ENCODE measurements at regions of chr3 and their contacts with region 1.

Region 1: DNA sequence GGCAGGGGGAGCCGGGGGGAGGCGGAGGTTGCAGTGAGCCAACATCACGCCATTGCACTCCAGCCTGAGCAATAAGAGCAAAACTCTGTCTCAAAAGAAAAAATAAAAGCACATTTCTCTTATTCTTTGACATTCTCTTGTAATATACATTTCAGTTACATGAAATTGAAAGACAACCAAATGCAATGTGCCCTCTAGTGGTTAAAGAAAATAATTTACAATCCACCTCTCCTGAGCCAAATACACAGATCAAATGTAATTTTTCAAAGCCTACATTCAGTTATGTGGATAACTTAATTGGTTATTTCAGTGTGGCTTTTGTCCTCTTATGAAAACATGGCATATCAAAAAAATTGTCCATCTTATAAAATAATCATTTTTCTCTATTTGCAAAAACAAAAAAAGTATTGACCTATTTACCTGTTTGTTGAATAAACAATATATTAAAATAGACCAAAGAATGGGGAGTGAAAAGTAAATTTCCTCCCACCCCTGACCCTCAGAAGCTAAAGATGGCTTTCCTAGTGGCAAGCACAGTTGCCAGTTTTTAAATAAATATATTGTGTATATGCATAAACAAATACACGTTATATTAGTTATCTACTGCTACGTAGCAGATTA is 14.2 kb upstream of the U2SURP start:
- DNase-seq: no peak
- ATAC-seq: peak; percentile 57
- H3K4me3 ChIP-seq: no peak overlapping the region
- H3K27ac ChIP-seq: no peak overlapping the region
- H3K4me1 ChIP-seq: no peaks in the 10 kb centered on the region
- H3K27me3 ChIP-seq: no peaks in the 10 kb centered on the region
- CTCF ChIP-seq: peak; percentile 74

Region 2: DNA sequence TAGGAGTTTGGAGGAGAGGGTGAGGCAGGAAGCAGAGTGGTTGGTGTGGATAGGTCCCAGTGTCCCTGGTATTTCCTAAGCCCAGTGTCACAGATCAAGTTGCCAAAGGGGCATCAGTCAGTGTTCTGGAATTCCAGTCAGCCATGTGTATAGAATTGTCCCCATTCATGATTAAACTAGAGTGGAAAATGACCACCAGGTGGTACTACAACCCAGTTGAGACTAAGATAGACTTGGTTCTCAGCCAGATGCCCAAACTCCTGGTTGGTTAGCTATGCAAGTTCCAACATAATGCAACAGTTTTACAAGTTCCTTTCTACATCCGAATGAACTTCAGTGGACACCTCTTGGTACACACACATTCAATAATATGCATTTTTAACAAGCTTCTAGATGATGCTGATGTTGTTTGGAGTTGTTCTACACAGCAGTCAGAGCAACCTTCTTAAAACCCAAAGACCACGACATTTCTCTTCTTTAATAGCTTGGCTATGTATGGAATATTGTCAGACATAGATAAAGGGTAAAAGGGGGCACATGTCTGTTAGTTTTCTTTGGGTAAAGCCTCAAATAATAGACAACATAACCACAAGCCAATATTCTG is 400.3 kb before region 1 on chr3:
- intact Hi-C with region 1: loop called (anchors 10 kb)
- DNase-seq: no peak
- ATAC-seq: peak; percentile 95
- H3K4me3 ChIP-seq: no peak overlapping the region
- H3K27ac ChIP-seq: no peak overlapping the region
- H3K4me1 ChIP-seq: no peaks in the 10 kb centered on the region
- H3K27me3 ChIP-seq: peaks cover 6% of the 10 kb centered on the region
- CTCF ChIP-seq: peak; percentile 59

Region 3: DNA sequence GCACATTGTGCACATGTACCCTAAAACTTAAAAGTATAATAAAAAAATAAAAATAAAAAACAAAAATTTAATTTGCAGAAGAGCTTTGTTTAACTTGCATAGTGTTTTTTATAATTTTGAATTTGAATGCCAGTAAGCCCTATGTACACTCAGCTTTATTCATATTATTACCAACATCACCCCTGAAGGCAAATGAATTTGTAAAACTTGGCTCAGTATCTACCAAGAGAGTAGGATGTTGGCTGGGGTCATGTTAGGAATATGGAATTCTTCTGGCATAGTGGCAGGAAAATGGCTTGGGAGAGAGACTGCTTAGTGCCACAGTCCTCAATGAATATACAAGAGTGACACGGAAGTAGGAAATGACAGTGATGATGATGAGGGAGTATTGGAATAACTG is 232.7 kb before region 1 on chr3:
- intact Hi-C with region 1: no loop called
- DNase-seq: no peak
- ATAC-seq: no peak
- H3K4me3 ChIP-seq: no peak overlapping the region
- H3K27ac ChIP-seq: no peak overlapping the region
- H3K4me1 ChIP-seq: no peaks in the 10 kb centered on the region
- H3K27me3 ChIP-seq: no peaks in the 10 kb centered on the region
- CTCF ChIP-seq: no peak

Region 4: DNA sequence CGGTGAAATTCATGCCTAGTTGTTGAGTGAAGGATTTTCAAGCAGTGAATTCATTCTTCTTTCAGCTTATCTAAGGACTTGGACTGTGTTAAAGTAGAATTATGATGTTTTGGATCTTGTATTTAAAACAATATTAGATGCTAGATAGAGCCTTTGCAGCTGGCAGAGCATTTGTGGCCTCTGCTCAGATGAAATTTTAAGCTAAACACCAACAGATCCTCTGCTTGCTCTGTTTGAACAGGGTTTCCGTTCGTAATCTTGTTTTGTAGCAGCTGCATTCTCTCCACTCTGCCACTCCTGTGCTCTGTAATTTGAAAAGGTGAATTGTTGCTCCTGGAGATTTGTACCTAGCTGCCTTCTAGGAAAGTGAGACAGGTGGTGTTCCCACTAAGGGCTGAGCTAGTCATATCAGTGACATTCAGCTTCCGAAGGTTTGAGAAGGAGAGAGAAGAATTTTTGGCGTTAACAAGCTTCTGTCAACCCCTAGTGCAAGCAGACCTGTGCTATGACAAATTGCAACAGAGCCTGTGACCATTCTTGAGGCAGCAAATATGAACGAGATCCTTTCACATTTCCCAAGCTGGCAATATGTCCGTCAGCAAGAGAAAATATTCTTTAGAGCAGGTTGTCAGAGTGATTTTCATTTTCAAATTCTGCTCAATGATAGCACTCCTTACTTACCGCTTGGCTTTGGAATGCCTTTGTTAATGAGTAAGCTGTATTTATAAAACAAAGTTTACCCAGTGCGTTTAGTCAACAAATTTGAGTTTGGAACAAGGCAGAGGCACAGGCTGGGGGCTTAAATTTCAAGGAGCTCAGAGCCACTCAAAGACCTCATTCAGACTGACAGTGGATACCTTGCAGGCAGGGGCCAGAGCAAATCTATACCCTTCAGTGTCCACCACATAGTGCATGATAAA is 137.7 kb after region 1 on chr3:
- intact Hi-C with region 1: no loop called
- DNase-seq: no peak
- ATAC-seq: no peak
- H3K4me3 ChIP-seq: peak overlapping the region; percentile 17
- H3K27ac ChIP-seq: no peak overlapping the region
- H3K4me1 ChIP-seq: peaks cover 10% of the 10 kb centered on the region
- H3K27me3 ChIP-seq: no peaks in the 10 kb centered on the region
- CTCF ChIP-seq: no peak

Measured in upper lobe of right lung (tissue), 1 donor.